ENCODE measurements at regions of chr19 and their contacts with region 1.

Region 1: GRCh38 chr19:6725513-6726231 is 5.2 kb upstream of the C3 start:
- DNase-seq: no peak
- H3K4me3 ChIP-seq: no peak overlapping the region
- H3K27ac ChIP-seq: no peak overlapping the region
- H3K4me1 ChIP-seq: peaks cover 0 to 68% (median 50%) of the 10 kb centered on the region in 4 experiments
- H3K27me3 ChIP-seq: no peaks in the 10 kb centered on the region

Region 2: GRCh38 chr19:6649185-6649584 is 76.5 kb before region 1 on chr19:
- CTCF ChIA-PET with region 1: no interaction called
- POLR2A ChIA-PET with region 1: no interaction called
- DNase-seq: no peak
- H3K4me3 ChIP-seq: no peak overlapping the region
- H3K27ac ChIP-seq: no peak overlapping the region
- H3K4me1 ChIP-seq: peaks cover 0 to 7% (median 5%) of the 10 kb centered on the region in 4 experiments
- H3K27me3 ChIP-seq: peaks cover 0 to 56% (median 19%) of the 10 kb centered on the region in 5 experiments

Region 3: GRCh38 chr19:6710273-6711077 is 15.2 kb before region 1 on chr19:
- CTCF ChIA-PET with region 1: no interaction called
- POLR2A ChIA-PET with region 1: no interaction called
- DNase-seq: no peak
- H3K4me3 ChIP-seq: peak overlapping the region in 1 of 7 experiments; percentile 13
- H3K27ac ChIP-seq: no peak overlapping the region
- H3K4me1 ChIP-seq: no peaks in the 10 kb centered on the region
- H3K27me3 ChIP-seq: peaks cover 0 to 38% (median 14%) of the 10 kb centered on the region in 5 experiments

Region 4: DNA sequence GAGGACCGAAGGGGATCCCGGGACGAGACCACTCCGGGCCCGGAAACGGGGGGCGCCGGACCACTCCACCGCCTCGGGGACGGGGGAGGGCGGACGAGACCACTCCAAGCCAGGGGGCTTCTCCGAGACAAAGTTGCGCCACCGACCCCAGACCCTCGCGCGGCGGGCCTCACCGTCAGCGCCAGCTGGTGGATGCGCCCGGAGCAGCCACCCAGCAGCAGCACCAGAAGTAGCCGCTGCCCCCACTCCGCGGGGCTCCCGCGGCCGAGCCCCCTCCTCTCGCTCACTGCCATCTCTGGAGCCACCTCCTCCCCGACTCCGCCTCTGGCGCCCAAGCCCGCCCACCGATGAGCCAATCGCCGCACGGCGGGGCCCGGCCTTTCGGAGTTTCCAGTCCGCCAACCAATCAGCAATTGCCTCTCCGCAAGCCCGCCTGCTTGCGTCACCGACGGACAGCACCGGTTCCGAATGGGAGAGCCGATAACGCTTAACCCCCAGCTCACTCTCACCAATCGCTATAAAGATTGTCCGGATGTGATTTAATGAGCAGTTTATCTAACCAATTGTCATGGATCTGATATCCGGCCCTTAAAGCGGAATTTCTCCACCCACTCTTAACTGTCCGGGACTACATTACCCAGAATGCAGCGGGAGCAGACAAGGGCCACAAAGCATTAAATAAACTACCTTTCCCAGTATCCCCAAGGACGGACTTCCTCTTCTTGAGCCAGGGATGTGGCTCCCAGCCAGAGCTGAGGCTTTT is 11.8 kb after region 1 on chr19 and contains the start of gene GPR108:
- CTCF ChIA-PET with region 1: interaction called, 12 read pairs
- POLR2A ChIA-PET with region 1: interaction called, 3 read pairs
- DNase-seq: peak; percentile 100
- H3K4me3 ChIP-seq: peak within 1 kb of the TSS; percentile 77 to 93 (median 79)
- H3K27ac ChIP-seq: peak within 1 kb of the TSS; percentile 95 to 98
- H3K4me1 ChIP-seq: peaks cover 5 to 54% (median 50%) of the 10 kb centered on the region in 4 experiments
- H3K27me3 ChIP-seq: no peaks in the 10 kb centered on the region

Measured in common myeloid progenitor, CD34-positive (primary cell).